ENCODE measurements at regions of chr10 and their contacts with region 1.

Region 1: DNA sequence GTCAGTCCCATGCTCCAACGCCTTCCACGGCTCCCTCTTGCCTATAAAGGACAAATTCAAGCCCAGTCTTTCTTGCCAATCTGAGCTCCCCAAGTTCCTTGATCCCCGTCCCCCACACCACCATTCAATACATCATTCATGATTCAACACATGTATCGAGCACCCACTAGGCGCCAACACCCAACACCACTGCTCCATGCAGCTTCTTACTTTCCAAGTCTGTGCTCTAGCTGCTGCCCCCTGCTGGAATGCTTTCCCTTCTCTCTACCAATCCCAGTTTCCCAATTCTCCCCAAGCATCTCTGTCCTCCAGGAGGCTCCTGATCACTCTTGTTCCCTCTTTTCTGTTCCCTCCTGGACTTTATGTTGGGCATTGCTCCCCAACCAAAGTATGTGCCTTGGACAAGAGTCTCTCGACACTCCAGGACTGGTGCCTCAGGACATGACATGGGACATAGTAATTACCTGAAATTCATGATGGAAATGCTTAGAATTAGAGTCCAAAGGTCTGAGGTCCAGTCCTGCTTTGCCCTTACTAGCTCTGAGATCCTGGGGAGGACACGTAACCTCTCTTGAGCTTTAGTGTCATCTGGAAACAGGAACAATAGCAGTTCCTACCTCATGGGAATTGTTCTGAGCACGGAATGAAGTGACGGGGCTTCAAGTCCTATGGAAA is 172.7 kb downstream of the NEURL1 start:
- DNase-seq: no peak
- H3K4me3 ChIP-seq: no peak overlapping the region
- H3K27ac ChIP-seq: no peak overlapping the region
- H3K4me1 ChIP-seq: peaks cover 13% of the 10 kb centered on the region
- H3K27me3 ChIP-seq: no peaks in the 10 kb centered on the region
- CTCF ChIP-seq: peak; percentile 43 to 51
- POLR2A ChIP-seq: no peak

Region 2: GRCh38 chr10:103598654-103599115 is 67.5 kb before region 1 on chr10:
- CTCF ChIA-PET with region 1: interaction called, 4 read pairs
- POLR2A ChIA-PET with region 1: no interaction called
- dilution Hi-C with region 1: no loop called
- intact Hi-C with region 1: loop called (anchors 1 kb)
- DNase-seq: peak; percentile 70
- H3K4me3 ChIP-seq: no peak overlapping the region
- H3K27ac ChIP-seq: no peak overlapping the region
- H3K4me1 ChIP-seq: peaks cover 17% of the 10 kb centered on the region
- H3K27me3 ChIP-seq: no peaks in the 10 kb centered on the region
- CTCF ChIP-seq: peak; percentile 78
- POLR2A ChIP-seq: no peak

Region 3: GRCh38 chr10:103696411-103697145 is 30.4 kb after region 1 on chr10:
- CTCF ChIA-PET with region 1: no interaction called
- POLR2A ChIA-PET with region 1: no interaction called
- dilution Hi-C with region 1: no loop called
- intact Hi-C with region 1: loop called (anchors 2 kb)
- DNase-seq: peak; percentile 83
- H3K4me3 ChIP-seq: no peak overlapping the region
- H3K27ac ChIP-seq: peak overlapping the region; percentile 61
- H3K4me1 ChIP-seq: peaks cover 20% of the 10 kb centered on the region
- H3K27me3 ChIP-seq: no peaks in the 10 kb centered on the region
- CTCF ChIP-seq: peak; percentile 56 to 63
- POLR2A ChIP-seq: no peak

Region 4: DNA sequence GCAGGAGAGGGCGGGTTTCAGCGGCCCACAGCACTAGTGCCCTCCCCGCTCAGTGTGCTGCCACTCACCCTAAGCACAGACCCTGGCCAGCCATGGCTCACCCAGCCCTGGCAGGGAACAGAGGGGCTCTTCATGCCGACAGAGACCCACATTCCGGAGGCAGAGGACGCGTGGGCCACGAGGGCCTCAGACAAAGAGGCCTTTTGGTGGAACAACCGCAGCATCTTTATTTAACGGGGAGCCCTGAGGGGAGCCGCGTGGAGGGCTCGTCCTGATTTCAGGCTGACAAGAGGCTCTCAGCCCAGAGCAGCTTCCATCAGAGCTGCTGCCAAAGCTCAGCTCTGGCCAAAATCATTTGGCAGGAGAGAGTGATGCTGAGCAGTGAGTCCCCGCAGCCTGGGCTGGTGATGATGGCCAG is 61.3 kb after region 1 on chr10:
- CTCF ChIA-PET with region 1: no interaction called
- POLR2A ChIA-PET with region 1: no interaction called
- dilution Hi-C with region 1: no loop called
- intact Hi-C with region 1: no loop called
- DNase-seq: no peak
- H3K4me3 ChIP-seq: no peak overlapping the region
- H3K27ac ChIP-seq: no peak overlapping the region
- H3K4me1 ChIP-seq: peaks cover 10% of the 10 kb centered on the region
- H3K27me3 ChIP-seq: no peaks in the 10 kb centered on the region
- CTCF ChIP-seq: no peak
- POLR2A ChIP-seq: no peak